Astrocyte of the cerebellum (primary cell): ENCODE measurements at regions of chr9 and their contacts with region 1.

Region 1: DNA sequence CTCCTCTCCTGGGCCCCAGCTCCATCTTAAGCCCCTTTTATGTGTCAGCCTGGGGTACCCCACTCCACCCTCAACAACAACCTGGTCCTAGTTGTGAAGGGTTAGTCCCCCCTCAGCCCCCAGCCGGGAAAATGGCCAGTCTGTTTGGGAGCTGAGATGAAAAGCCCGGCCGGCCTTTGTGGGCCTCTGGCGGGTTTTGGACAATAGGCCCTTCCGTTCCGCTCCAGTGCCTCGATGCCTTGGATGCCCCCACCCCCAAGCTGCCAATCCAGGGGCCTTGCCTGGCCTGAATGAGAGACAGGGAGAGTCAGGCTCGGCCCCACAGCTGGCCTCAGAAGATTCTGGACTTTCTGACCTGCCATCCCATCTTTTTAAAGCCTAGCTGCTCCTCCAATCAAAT is 9.2 kb downstream of the CNTFR start:
- DNase-seq: no peak
- H3K4me3 ChIP-seq: no peak overlapping the region
- CTCF ChIP-seq: no peak

Region 2: DNA sequence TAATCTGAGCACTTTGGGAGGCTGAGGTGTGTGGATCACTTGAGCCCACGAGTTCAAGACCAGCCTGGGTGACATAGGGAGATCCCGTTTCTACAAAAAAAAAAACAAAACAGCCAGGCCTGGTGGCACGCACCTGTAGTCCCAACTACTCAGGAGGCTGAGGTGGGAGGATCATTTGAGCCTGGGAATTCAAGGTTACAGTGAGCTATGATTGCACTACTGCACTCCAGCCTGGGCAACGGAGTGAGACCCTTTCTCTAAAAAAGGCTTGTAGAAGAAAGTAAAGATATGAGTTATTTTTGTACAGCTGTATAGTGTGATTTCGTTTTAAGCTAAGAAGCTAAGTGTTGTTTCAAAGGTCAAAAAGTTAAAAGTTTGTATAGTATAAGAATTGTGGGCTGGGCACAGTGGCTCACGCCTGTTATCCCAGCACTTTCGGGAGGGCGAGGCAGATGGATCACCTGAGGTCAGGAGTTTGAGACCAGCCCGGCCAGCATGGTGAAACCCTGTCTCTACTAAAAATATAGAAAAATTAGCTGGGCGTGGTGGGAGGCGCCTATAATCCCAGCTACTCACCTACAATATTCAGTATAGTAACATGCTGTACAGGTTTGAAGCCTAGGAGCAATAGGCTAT is 744.6 kb before region 1 on chr9:
- in situ Hi-C with region 1: no loop called
- DNase-seq: no peak
- H3K4me3 ChIP-seq: no peak overlapping the region
- CTCF ChIP-seq: no peak

Region 3: DNA sequence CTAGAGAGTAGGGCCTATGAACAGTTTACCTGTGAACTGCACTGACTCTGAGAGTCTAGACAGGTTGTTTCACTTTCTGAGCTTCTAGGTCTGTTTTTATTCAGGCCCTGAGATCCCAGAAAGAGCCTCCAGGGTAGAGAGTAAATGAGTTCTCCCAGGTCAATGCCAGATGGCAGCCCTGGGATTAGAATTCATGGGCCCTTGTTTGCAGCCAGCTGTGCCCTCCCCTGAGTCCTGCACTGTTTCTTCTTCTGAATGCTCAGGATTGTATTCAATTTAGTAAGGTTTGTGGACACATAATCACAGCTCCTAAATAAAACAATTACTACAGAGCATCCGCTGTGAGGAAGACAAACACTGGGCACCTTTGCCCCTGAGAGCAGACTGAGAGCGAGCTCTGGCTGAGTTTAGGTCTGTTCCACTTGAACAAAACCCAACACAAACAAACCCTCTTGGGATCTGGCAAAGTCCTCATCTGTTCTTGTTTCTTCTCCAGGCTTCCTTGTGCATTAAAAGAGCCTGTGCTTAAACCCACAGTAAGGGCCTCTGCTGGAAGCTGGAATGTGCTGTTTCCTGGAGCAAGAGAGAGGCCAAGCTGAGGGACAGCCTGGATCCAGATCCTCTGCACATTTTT is 151.9 kb before region 1 on chr9:
- in situ Hi-C with region 1: loop called (anchors 5 kb)
- DNase-seq: peak; percentile 53
- H3K4me3 ChIP-seq: no peak overlapping the region
- CTCF ChIP-seq: no peak

Region 4: GRCh38 chr9:34540828-34541227 is 39.5 kb before region 1 on chr9:
- in situ Hi-C with region 1: no loop called
- DNase-seq: no peak
- H3K4me3 ChIP-seq: no peak overlapping the region
- CTCF ChIP-seq: no peak

Region 5: GRCh38 chr9:34628656-34629491 is 48.5 kb after region 1 on chr9 and contains the start of gene ARID3C:
- in situ Hi-C with region 1: loop called (anchors 5 kb)
- DNase-seq: no peak
- H3K4me3 ChIP-seq: peak within 1 kb of the TSS; percentile 25
- CTCF ChIP-seq: no peak